ENCODE measurements at regions of chr15 and their contacts with region 1.

Region 1: DNA sequence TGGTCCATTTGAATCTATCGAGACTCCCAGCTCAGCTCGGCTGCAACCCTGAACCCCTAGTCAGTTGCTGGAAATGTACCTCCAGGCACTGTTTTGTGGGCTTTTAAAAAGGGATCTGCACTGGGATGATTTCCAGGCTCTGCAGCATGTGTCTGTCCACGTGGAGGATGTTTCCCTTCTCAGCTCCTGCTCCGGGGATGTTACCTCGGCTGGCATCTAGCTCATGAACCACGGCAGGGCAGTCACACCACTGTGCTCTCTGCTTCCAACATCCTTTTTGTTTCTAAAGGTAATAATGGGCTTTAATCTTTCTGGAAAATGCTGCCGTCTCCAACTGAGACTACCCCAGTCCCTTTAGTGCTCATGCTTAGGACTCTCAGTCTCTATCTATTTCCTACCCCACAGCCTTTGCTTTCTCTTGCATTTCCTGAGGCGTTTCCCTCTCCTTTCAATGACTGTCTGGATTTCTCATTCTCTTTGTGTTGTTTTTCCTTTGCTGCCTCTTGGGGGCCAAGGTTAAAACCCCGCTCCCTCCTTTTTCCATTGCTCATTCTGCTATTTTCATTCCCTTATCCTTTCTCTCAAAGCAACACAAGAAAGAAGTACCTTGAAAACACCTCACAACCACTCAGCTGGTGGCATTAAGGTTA is 42.9 kb upstream of the AKAP13 start:
- DNase-seq: peak in 1 of 5 donors; percentile 31
- H3K4me3 ChIP-seq: no peak overlapping the region
- H3K27ac ChIP-seq: no peak overlapping the region
- H3K4me1 ChIP-seq: peaks cover 4% of the 10 kb centered on the region
- H3K27me3 ChIP-seq: no peaks in the 10 kb centered on the region
- CTCF ChIP-seq: no peak
- EP300 ChIP-seq: no peak
- POLR2A ChIP-seq: no peak

Region 2: GRCh38 chr15:85379403-85380131 is 42.0 kb after region 1 on chr15:
- intact Hi-C with region 1: loop called in 1 of 4 experiments (anchors 5 kb)
- DNase-seq: peak in 1 of 5 donors; percentile 22
- H3K4me3 ChIP-seq: peak overlapping the region; percentile 78
- H3K27ac ChIP-seq: peak overlapping the region in 1 of 2 donors; percentile 5
- H3K4me1 ChIP-seq: peaks cover 7% of the 10 kb centered on the region
- H3K27me3 ChIP-seq: no peaks in the 10 kb centered on the region
- CTCF ChIP-seq: no peak
- EP300 ChIP-seq: no peak
- POLR2A ChIP-seq: no peak

Region 3: DNA sequence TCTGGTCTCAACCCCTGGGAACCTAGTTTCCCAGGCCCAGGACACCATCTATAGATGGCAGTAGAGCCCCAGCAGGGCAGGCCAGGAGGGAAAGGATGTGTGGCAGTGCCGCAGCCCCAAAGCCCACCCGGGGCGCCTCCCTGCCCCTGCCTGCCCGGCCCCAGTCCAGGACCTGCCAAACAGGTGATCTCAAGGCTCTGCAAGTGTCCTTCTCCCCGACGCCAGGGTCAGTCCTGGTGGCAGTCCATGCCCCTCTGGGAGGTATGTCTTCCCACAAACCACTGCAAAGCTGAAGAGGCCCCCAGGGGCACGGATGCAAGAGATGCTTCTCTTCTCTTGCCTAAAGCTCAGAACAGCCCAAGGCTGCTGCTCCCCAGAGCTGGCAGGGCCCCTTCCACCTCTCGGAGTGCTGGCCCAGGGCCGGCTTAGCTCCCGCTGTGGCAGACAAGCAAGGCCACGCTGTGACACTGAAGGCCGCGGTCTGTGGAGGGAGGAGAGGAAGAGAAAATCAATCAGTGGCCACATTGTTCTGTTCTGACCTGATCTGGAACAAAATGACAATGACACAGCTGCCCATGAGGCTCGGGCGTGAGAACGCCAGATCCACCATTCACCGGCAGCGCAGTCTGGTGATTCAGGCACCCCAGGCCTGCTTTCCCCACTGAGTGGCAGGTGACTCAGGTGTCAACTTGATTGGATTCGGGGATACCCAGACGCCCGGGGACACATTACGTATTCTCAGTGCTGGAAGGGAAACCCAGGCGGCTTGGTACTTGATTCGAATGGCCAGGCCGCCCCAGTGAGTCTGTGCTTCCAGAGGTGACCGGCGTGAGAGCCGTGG is 423.2 kb after region 1 on chr15:
- intact Hi-C with region 1: no loop called
- DNase-seq: no peak
- H3K4me3 ChIP-seq: no peak overlapping the region
- H3K27ac ChIP-seq: no peak overlapping the region
- H3K4me1 ChIP-seq: no peaks in the 10 kb centered on the region
- H3K27me3 ChIP-seq: no peaks in the 10 kb centered on the region
- CTCF ChIP-seq: no peak
- EP300 ChIP-seq: no peak
- POLR2A ChIP-seq: no peak

Measured in ovary (tissue), 10 donors.